ENCODE measurements at regions of chr20 and their contacts with region 1.

Region 1: DNA sequence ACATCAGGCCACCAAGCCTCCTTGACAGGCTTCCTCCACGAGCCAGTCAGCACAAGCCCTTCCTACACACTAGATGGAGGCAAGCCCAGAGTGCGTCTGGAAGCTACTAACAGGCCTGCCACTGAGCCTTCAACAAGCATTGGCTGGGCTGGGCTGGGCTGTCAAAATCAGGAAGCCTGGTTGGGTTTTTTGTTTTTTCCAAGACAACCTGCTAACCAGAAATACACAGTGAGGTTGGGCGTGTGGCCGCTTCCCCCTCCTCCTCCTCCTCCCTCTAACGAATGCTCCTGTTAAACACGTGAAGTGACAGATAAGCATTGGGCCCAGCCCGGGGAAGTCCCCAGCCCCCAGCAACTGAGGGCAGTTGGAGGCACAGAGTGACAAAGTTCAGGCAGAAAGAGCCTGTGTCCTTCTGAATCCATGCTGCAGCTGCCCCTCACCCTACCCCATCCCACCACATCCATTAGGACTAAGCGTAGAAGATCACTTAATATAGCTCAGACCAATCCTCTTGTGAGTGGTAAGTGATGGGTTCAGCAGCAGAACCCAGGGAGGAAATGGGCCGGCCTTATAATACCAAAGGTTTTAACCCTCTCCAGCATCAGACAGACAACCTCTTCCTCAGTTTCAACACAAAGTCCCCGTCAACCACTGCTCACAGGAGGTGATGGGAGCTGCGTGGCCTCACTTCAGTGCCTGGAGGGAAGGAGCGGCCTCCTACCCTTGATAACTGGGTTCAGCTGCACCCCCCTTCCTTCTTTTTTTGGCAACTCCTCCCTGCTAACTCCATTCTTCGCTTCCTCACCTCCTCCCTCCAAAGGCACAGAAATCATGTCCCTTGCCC is 1.1 kb downstream of the NFATC2 start:
- DNase-seq: peak; percentile 58 to 80
- ATAC-seq: peak; percentile 25 to 64 (median 57)
- H3K4me3 ChIP-seq: peak overlapping the region; percentile 75
- H3K27ac ChIP-seq: peak overlapping the region; percentile 89
- H3K4me1 ChIP-seq: peaks cover 21% of the 10 kb centered on the region
- H3K27me3 ChIP-seq: no peaks in the 10 kb centered on the region
- CTCF ChIP-seq: no peak

Region 2: DNA sequence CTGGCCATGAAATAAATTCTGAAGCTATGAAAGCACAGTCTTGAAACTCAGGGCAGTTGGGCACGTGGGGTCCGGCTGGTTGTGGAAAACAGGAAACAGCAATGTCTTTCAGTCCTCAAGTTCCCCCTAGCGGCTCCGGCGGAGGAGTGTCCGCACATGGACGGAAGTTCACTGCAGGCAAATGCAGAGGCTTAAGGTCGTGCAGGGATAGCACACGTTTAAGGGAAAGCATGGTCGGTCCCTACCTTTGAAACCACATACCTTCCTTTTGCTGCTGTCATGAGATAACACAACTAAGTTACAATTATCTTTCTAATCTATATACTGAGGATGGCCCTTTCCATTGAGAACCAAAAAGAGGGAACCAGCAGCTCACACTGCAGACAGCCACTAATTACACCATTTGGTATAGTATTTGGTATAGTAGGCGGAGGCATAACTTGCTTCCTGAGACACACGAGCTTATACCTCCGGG is 53.7 kb after region 1 on chr20:
- intact Hi-C with region 1: loop called in 1 of 2 experiments (anchors 5 kb)
- DNase-seq: peak; percentile 83 to 92
- ATAC-seq: peak; percentile 92 to 100 (median 97)
- H3K4me3 ChIP-seq: no peak overlapping the region
- H3K27ac ChIP-seq: no peak overlapping the region
- H3K4me1 ChIP-seq: peaks cover 5% of the 10 kb centered on the region
- H3K27me3 ChIP-seq: no peaks in the 10 kb centered on the region
- CTCF ChIP-seq: peak; percentile 91

Measured in psoas muscle (tissue), 8 donors.